Mammary epithelial cell (primary cell): ENCODE measurements at regions of chr11 and their contacts with region 1.

Region 1: GRCh38 chr11:2940559-2940929 is 11.3 kb upstream of the PHLDA2 start:
- DNase-seq: peak; percentile 57
- H3K4me3 ChIP-seq: no peak overlapping the region
- H3K27ac ChIP-seq: peak overlapping the region; percentile 78
- H3K4me1 ChIP-seq: peaks cover 29% of the 10 kb centered on the region
- H3K27me3 ChIP-seq: no peaks in the 10 kb centered on the region
- CTCF ChIP-seq: no peak

Region 2: GRCh38 chr11:3000082-3000961 is 59.8 kb after region 1 on chr11:
- CTCF ChIA-PET with region 1: no interaction called
- dilution Hi-C with region 1: loop called (anchors 5 kb)
- in situ Hi-C with region 1: no loop called
- intact Hi-C with region 1: no loop called
- DNase-seq: peak; percentile 96
- H3K4me3 ChIP-seq: no peak overlapping the region
- H3K27ac ChIP-seq: peak overlapping the region; percentile 63
- H3K4me1 ChIP-seq: peaks cover 63% of the 10 kb centered on the region
- H3K27me3 ChIP-seq: no peaks in the 10 kb centered on the region
- CTCF ChIP-seq: no peak

Region 3: GRCh38 chr11:3058753-3059664 is 118.5 kb after region 1 on chr11:
- CTCF ChIA-PET with region 1: no interaction called
- dilution Hi-C with region 1: no loop called
- in situ Hi-C with region 1: no loop called
- intact Hi-C with region 1: no loop called
- DNase-seq: peak; percentile 65
- H3K4me3 ChIP-seq: no peak overlapping the region
- H3K27ac ChIP-seq: no peak overlapping the region
- H3K4me1 ChIP-seq: peaks cover 20% of the 10 kb centered on the region
- H3K27me3 ChIP-seq: no peaks in the 10 kb centered on the region
- CTCF ChIP-seq: no peak